CD14-positive monocyte (primary cell): ENCODE measurements at regions of chr19 and their contacts with region 1.

Region 1: DNA sequence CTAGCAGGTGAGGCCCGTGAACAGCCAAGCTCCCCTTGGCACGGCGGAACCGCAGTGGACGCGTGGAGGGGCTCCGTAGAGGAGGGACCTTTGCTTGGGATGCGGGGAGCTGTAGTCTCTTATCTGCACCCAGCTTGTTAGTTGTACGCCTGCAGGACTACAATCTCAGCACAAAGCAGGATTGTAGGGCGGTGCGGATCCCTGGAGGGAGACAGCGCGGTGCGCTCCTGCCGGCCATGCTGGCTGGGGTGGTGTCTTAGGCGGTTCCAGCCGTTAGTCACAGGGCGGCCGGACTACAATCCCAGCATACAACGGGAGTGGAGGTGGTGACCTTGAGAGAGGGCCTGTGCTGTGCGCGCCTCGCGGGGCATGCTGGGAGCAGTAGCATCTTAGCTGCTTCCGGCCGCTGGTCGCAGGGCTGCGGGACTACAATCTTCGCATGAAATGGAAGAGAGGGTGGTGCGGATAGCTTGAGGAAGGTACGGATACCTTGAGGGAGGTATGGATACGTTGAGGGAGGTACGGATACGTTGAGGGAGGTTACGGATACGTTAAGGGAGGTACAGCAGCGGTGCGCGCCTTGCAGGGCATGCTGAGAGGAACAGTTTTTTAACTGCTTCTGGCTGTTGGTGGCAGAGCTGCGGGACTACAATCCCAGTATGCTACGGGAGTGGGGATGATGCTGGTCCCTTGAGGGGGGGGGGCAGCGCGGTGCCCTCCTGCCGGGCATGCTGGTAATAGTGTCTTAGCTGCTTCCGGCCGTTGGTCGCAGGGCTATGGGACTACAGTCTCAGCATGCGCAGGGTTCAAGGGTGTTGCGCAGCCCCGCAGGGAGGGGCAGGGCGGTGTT is 1419.1 kb downstream of the UQCRFS1 start:
- DNase-seq: peak; percentile 84 to 89 (median 86)
- H3K4me3 ChIP-seq: peak overlapping the region; percentile 70 to 94 (median 71)
- H3K4me3 Mint-ChIP-seq: peak overlapping the region; percentile 94 to 99
- H3K27ac ChIP-seq: peak overlapping the region; percentile 82 to 93
- H3K27ac Mint-ChIP-seq: peak overlapping the region; percentile 88 to 95 (median 92)
- H3K4me1 ChIP-seq: peaks cover 24 to 35% of the 10 kb centered on the region in 2 donors
- H3K4me1 Mint-ChIP-seq: peaks cover 29% of the 10 kb centered on the region
- H3K27me3 ChIP-seq: no peaks in the 10 kb centered on the region
- H3K27me3 Mint-ChIP-seq: peaks cover 0 to 3% (median 0%) of the 10 kb centered on the region in 3 donors
- CTCF ChIP-seq: no peak

Region 2: GRCh38 chr19:27776020-27776419 is 17.8 kb before region 1 on chr19:
- intact Hi-C with region 1: loop called in 1 of 2 experiments (anchors 2 kb)
- DNase-seq: peak; percentile 38 to 71 (median 58)
- H3K4me3 ChIP-seq: no peak overlapping the region
- H3K4me3 Mint-ChIP-seq: peak overlapping the region in 1 of 2 donors; percentile 47
- H3K27ac ChIP-seq: no peak overlapping the region
- H3K27ac Mint-ChIP-seq: peak overlapping the region in 2 of 7 donors; percentile 51 to 52
- H3K4me1 ChIP-seq: peaks cover 14 to 26% of the 10 kb centered on the region in 2 donors
- H3K4me1 Mint-ChIP-seq: peaks cover 30% of the 10 kb centered on the region
- H3K27me3 ChIP-seq: no peaks in the 10 kb centered on the region
- H3K27me3 Mint-ChIP-seq: peaks cover 0 to 2% (median 0%) of the 10 kb centered on the region in 3 donors
- CTCF ChIP-seq: peak; percentile 72

Region 3: GRCh38 chr19:27851002-27851481 is 57.2 kb after region 1 on chr19:
- intact Hi-C with region 1: no loop called
- DNase-seq: no peak
- H3K4me3 ChIP-seq: no peak overlapping the region
- H3K4me3 Mint-ChIP-seq: no peak overlapping the region
- H3K27ac ChIP-seq: no peak overlapping the region
- H3K27ac Mint-ChIP-seq: no peak overlapping the region
- H3K4me1 ChIP-seq: no peaks in the 10 kb centered on the region
- H3K4me1 Mint-ChIP-seq: no peaks in the 10 kb centered on the region
- H3K27me3 ChIP-seq: no peaks in the 10 kb centered on the region
- H3K27me3 Mint-ChIP-seq: peaks cover 0 to 1% (median 0%) of the 10 kb centered on the region in 3 donors
- CTCF ChIP-seq: no peak